Mammary epithelial cell (primary cell): ENCODE measurements at regions of chr7 and their contacts with region 1.

Region 1: GRCh38 chr7:66452165-66452564 is 176.5 kb upstream of the KCTD7 start:
- DNase-seq: no peak
- H3K4me3 ChIP-seq: no peak overlapping the region
- H3K27ac ChIP-seq: no peak overlapping the region
- H3K4me1 ChIP-seq: no peaks in the 10 kb centered on the region
- H3K27me3 ChIP-seq: no peaks in the 10 kb centered on the region
- CTCF ChIP-seq: no peak

Region 2: DNA sequence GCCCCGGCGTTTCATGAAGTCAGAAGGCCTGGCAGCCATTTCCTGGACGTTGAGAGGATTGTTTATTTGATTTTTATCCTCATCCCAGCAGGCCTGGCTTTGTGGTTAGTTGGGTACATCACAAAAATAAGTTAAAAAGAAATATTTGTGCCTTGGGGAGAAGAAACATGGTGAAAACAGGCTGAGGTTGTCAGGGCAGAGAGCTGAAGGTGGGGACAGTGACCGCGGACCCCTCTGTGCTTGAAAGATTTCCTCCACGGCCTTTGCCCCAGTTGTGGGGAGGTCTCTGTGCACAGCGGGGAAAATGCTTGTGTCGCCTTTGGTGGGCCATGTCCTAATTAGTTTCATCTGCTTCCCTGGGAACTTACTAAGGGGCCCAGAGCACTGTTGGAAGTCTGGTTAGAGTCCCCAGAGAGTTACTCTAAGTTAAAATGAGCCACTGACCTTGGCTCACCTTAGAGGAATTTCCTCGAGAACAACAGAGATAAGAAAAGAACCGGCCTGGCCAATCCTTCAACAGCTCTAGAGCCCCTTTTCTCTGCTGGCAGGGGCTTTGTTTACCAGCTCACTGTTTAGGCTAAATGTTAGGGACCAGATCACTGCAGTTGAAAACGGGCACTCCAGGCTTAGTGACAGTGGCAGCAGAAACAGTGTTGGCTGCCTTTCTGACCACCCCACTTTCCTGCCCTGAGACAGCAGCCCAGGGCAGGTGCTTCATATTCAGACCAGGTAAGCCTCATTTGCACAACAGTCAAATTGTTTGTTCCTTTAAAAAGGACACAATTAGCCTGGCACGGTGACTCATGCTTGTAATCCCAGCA is 299.6 kb before region 1 on chr7:
- CTCF ChIA-PET with region 1: no interaction called
- dilution Hi-C with region 1: no loop called
- in situ Hi-C with region 1: no loop called
- intact Hi-C with region 1: no loop called
- DNase-seq: no peak
- H3K4me3 ChIP-seq: no peak overlapping the region
- H3K27ac ChIP-seq: no peak overlapping the region
- H3K4me1 ChIP-seq: peaks cover 17% of the 10 kb centered on the region
- H3K27me3 ChIP-seq: no peaks in the 10 kb centered on the region
- CTCF ChIP-seq: no peak

Region 3: GRCh38 chr7:66413379-66414114 is 38.6 kb before region 1 on chr7:
- CTCF ChIA-PET with region 1: no interaction called
- dilution Hi-C with region 1: loop called (anchors 10 kb)
- in situ Hi-C with region 1: no loop called
- intact Hi-C with region 1: no loop called
- DNase-seq: peak; percentile 73
- H3K4me3 ChIP-seq: peak overlapping the region; percentile 26 to 57 (median 45)
- H3K27ac ChIP-seq: peak overlapping the region; percentile 12
- H3K4me1 ChIP-seq: peaks cover 4% of the 10 kb centered on the region
- H3K27me3 ChIP-seq: no peaks in the 10 kb centered on the region
- CTCF ChIP-seq: peak; percentile 42 to 63

Region 4: DNA sequence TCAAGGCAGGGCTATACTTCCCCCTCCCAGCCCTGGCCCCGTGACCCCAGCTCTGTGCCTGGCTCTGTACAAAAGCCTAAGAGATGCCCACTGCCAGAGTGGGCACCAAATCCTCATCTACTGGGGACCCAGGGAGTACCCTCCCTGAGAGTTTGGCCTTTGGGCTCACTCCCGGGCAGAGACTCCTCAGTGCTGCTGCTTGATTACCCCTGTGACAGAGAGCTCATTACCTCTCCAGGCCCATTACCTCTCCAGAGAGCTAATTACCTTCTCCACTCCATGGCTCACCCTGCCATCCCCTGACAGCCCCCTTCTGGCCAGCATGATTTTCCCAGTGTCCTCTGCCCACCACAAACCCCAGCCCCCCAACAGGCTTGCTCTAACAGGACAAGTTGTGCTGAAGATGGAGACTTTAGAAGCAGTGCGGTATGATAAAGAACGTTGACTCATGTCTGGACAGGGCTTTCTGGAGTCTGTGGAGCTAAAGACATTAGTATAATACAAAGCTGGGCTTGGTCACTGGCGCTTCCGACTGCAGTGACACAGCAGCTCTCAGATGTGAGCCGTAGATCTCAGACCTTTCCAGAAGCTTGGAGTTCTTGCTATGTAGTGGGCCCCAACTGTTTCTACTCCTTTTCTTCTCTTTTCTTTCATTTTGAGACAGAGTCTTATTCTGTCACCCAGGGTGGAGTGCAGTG is 65.2 kb after region 1 on chr7:
- CTCF ChIA-PET with region 1: no interaction called
- dilution Hi-C with region 1: no loop called
- in situ Hi-C with region 1: no loop called
- intact Hi-C with region 1: no loop called
- DNase-seq: no peak
- H3K4me3 ChIP-seq: no peak overlapping the region
- H3K27ac ChIP-seq: no peak overlapping the region
- H3K4me1 ChIP-seq: no peaks in the 10 kb centered on the region
- H3K27me3 ChIP-seq: no peaks in the 10 kb centered on the region
- CTCF ChIP-seq: no peak